Sigmoid colon (tissue), 7 donors: ENCODE measurements at regions of chr3 and their contacts with region 1.

Region 1: GRCh38 chr3:187919048-187919447 is 173.8 kb upstream of the BCL6 start:
- DNase-seq: no peak
- H3K4me3 ChIP-seq: no peak overlapping the region
- H3K27ac ChIP-seq: no peak overlapping the region
- H3K4me1 ChIP-seq: peaks cover 0 to 29% (median 27%) of the 10 kb centered on the region in 4 donors
- H3K27me3 ChIP-seq: no peaks in the 10 kb centered on the region
- CTCF ChIP-seq: no peak
- EP300 ChIP-seq: no peak
- POLR2A ChIP-seq: no peak

Region 2: GRCh38 chr3:187783098-187783497 is 135.9 kb before region 1 on chr3:
- intact Hi-C with region 1: loop called (anchors 10 kb)
- DNase-seq: peak; percentile 81
- H3K4me3 ChIP-seq: no peak overlapping the region
- H3K27ac ChIP-seq: peak overlapping the region in 3 of 4 donors; percentile 28 to 62 (median 61)
- H3K4me1 ChIP-seq: peaks cover 0 to 13% (median 6%) of the 10 kb centered on the region in 4 donors
- H3K27me3 ChIP-seq: no peaks in the 10 kb centered on the region
- CTCF ChIP-seq: no peak
- EP300 ChIP-seq: no peak
- POLR2A ChIP-seq: no peak

Region 3: DNA sequence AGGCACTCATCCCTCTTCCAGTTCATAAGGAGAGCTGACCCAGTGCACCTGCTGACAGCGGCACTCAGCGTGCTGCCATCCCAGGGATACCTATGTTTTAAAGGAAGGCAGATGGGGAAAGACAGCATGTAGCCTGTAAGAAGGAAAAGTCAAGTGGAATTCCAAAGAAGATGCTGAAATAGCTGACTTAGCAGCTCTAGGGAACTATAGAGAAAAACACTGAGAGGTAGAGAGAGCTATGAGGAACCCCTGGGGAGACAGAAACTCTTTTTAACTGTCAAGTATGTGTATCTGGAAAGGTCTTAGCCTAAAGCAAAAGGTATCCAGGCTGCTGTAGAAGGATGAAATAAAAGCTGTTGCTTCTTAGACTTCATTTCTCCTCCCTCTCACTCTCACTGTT is 60.3 kb before region 1 on chr3:
- intact Hi-C with region 1: no loop called
- DNase-seq: no peak
- H3K4me3 ChIP-seq: no peak overlapping the region
- H3K27ac ChIP-seq: no peak overlapping the region
- H3K4me1 ChIP-seq: no peaks in the 10 kb centered on the region
- H3K27me3 ChIP-seq: no peaks in the 10 kb centered on the region
- CTCF ChIP-seq: no peak
- EP300 ChIP-seq: no peak
- POLR2A ChIP-seq: no peak

Region 4: GRCh38 chr3:187974871-187975271 is 55.8 kb after region 1 on chr3:
- intact Hi-C with region 1: no loop called
- DNase-seq: no peak
- H3K4me3 ChIP-seq: no peak overlapping the region
- H3K27ac ChIP-seq: no peak overlapping the region
- H3K4me1 ChIP-seq: no peaks in the 10 kb centered on the region
- H3K27me3 ChIP-seq: no peaks in the 10 kb centered on the region
- CTCF ChIP-seq: no peak
- EP300 ChIP-seq: no peak
- POLR2A ChIP-seq: no peak

Region 5: DNA sequence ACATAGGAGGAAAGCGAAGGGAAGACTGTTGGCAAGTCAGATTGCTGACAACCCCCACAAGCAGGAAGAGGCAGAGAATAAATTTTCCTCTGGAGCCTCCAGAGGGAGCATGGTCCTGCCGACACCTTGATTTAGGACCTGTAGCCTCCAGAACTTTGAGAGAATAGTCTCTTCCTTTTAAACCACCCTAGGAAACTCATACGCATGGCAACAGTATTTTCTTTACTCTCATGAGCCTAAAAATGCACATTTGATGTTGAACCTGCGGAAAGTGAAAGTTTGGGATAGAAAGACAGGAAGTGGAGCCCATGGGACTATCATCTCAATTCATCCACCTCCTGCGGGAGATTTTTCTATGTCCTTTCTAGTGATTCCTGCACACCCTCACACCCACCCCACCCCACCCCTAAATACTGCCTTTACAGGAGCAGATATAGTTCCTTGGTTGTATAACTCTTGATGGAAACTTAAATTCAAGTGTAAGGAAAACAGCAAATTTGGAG is 118.2 kb after region 1 on chr3:
- intact Hi-C with region 1: loop called (anchors 5 kb)
- DNase-seq: no peak
- H3K4me3 ChIP-seq: no peak overlapping the region
- H3K27ac ChIP-seq: peak overlapping the region in 2 of 4 donors; percentile 5 to 23
- H3K4me1 ChIP-seq: peaks cover 0 to 14% (median 5%) of the 10 kb centered on the region in 4 donors
- H3K27me3 ChIP-seq: no peaks in the 10 kb centered on the region
- CTCF ChIP-seq: peak; percentile 31 to 54 (median 41)
- EP300 ChIP-seq: no peak
- POLR2A ChIP-seq: no peak

Region 6: DNA sequence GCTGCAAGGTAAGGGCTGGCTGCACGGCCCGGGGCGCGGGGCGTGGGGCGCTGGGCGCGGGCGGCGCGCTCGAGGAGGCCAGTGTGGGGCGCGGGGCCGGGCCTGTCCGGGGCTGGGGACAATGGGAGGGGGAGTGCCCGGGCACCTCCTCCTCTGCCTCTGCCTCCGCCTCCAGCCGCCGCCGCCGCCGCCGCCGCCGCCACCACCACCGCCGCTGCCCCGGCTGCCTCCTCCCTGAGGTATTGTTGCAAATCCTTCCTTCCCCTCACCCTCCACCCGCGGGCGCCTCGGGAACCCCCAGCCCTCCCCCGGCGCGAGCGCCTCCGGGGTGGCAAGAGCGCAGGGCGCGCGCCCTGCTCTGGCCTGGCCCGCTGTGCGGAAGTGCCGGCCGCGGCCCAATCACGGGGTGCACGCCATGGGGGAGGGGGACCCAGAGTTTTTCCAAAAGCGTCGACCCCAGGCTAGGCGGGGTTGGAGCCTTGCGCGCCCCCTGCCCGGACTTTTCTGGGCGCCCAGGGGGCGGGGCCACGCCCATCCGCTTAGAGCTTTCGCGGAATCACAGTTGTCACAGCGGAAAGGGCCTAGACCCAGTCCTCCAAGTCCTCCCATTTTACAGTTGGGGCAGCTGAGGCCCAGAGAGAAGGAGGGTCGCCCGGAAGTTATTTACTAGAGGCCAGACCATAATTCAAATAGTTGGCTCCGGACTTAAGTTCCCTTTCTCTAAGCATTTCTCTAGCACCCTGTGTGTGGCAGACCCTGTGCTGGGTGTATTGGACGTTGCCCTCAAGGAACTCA is 235.2 kb after region 1 on chr3 and contains the start of gene LPP:
- intact Hi-C with region 1: loop called (anchors 10 kb)
- DNase-seq: peak; percentile 92
- H3K4me3 ChIP-seq: peak within 1 kb of the TSS; percentile 68 to 93 (median 84)
- H3K27ac ChIP-seq: peak within 1 kb of the TSS; percentile 95 to 99 (median 98)
- H3K4me1 ChIP-seq: peaks cover 0 to 57% (median 47%) of the 10 kb centered on the region in 4 donors
- H3K27me3 ChIP-seq: no peaks in the 10 kb centered on the region
- CTCF ChIP-seq: no peak
- EP300 ChIP-seq: peak in 3 of 4 donors; percentile 2 to 64 (median 14)
- POLR2A ChIP-seq: no peak
- total RNA-seq, gene LPP: 824 to 1,773 (median 1,187) TPM

Region 7: GRCh38 chr3:188241072-188241471 is 322.0 kb after region 1 on chr3:
- intact Hi-C with region 1: no loop called
- DNase-seq: peak; percentile 85
- H3K4me3 ChIP-seq: peak overlapping the region in 2 of 4 donors; percentile 2 to 18
- H3K27ac ChIP-seq: peak overlapping the region; percentile 70 to 97 (median 83)
- H3K4me1 ChIP-seq: peaks cover 0 to 97% (median 88%) of the 10 kb centered on the region in 4 donors
- H3K27me3 ChIP-seq: no peaks in the 10 kb centered on the region
- CTCF ChIP-seq: no peak
- EP300 ChIP-seq: peak in 2 of 4 donors; percentile 62 to 66
- POLR2A ChIP-seq: no peak

Region 8: GRCh38 chr3:188954590-188955208 is 1035.7 kb after region 1 on chr3:
- intact Hi-C with region 1: loop called (anchors 5 kb)
- DNase-seq: peak; percentile 94
- H3K4me3 ChIP-seq: no peak overlapping the region
- H3K27ac ChIP-seq: peak overlapping the region in 2 of 4 donors; percentile 27 to 38
- H3K4me1 ChIP-seq: peaks cover 0 to 37% (median 26%) of the 10 kb centered on the region in 4 donors
- H3K27me3 ChIP-seq: no peaks in the 10 kb centered on the region
- CTCF ChIP-seq: peak; percentile 91 to 96 (median 94)
- EP300 ChIP-seq: no peak
- POLR2A ChIP-seq: no peak